ENCODE measurements at regions of chr17 and their contacts with region 1.

Region 1: GRCh38 chr17:11969565-11969964 is 27.7 kb downstream of the ZNF18 start:
- DNase-seq: no peak
- ATAC-seq: no peak
- H3K4me3 ChIP-seq: no peak overlapping the region
- H3K27ac ChIP-seq: no peak overlapping the region
- H3K4me1 ChIP-seq: no peaks in the 10 kb centered on the region
- H3K27me3 ChIP-seq: no peaks in the 10 kb centered on the region
- CTCF ChIP-seq: no peak
- POLR2A ChIP-seq: no peak
- RAD21 ChIP-seq: no peak

Region 2: DNA sequence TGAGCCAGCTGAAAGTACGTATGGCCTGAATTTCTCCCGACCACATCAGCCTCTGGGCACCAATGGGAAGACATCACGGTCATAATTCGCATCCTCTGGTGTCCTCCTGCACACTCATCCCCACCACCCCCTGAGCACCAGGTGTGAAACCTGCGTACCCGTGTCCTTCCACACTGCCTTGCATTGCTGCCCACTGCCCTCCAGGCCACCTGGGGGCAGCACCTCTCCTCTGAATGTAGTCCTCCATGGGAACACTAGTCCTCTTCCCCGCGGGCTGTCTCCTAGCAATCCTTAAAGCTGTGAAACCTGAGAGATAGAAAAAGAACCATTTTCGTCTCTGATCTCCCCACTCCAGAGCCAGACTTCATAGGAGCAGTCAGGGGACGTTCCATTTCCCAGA is 97.8 kb before region 1 on chr17:
- CTCF ChIA-PET with region 1: no interaction called
- POLR2A ChIA-PET with region 1: no interaction called
- dilution Hi-C with region 1: no loop called
- in situ Hi-C with region 1: no loop called
- intact Hi-C with region 1: no loop called
- DNase-seq: no peak
- ATAC-seq: no peak
- H3K4me3 ChIP-seq: no peak overlapping the region
- H3K27ac ChIP-seq: no peak overlapping the region
- H3K4me1 ChIP-seq: no peaks in the 10 kb centered on the region
- H3K27me3 ChIP-seq: no peaks in the 10 kb centered on the region
- CTCF ChIP-seq: no peak
- POLR2A ChIP-seq: no peak
- RAD21 ChIP-seq: no peak

Region 3: GRCh38 chr17:12201294-12201880 is 231.8 kb after region 1 on chr17:
- CTCF ChIA-PET with region 1: no interaction called
- POLR2A ChIA-PET with region 1: interaction called, 18 read pairs
- dilution Hi-C with region 1: no loop called
- in situ Hi-C with region 1: no loop called
- intact Hi-C with region 1: no loop called
- DNase-seq: no peak
- ATAC-seq: no peak
- H3K4me3 ChIP-seq: no peak overlapping the region
- H3K27ac ChIP-seq: no peak overlapping the region
- H3K4me1 ChIP-seq: no peaks in the 10 kb centered on the region
- H3K27me3 ChIP-seq: peaks cover 6% of the 10 kb centered on the region
- CTCF ChIP-seq: no peak
- POLR2A ChIP-seq: no peak
- RAD21 ChIP-seq: no peak